SK-N-SH (cell line): ENCODE measurements at regions of chr11 and their contacts with region 1.

Region 1: GRCh38 chr11:66976048-66976467 is 954 bp downstream of the C11orf86 start:
- DNase-seq: peak; percentile 86
- H3K4me3 ChIP-seq: no peak overlapping the region; a peak in 1 of 4 replicates
- H3K27ac ChIP-seq: no peak overlapping the region
- H3K4me1 ChIP-seq: peaks cover 0 to 11% of the 10 kb centered on the region in 2 experiments; a peak in 2 of 4 replicates
- H3K27me3 ChIP-seq: no peaks in the 10 kb centered on the region
- CTCF ChIP-seq: peak; percentile 86
- EP300 ChIP-seq: no peak
- RAD21 ChIP-seq: peak; percentile 90

Region 2: DNA sequence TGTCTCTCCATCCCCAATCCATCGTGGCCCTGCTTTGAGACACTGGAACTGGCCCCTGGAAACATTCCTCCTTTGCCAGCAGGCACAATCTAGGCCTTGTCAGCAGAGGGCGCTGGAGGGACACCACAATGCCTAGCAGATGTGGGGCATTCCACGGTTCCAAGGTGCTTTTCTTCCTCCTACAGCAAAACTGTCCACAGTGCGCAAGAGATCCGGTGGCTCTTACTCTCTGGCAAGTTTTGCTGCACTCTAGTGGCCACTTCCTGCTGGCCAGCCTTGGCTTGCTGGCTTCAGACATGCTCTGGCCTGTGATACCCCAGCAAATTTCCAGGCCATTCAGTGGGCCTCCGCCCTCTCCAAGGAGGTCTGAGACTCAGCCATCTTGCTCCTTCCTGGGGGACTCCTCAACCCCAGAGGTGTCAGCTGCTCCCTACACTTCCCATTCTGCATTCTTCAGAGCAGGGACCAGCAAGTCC is 281.3 kb before region 1 on chr11:
- CTCF ChIA-PET with region 1: interaction called, 34 read pairs
- POLR2A ChIA-PET with region 1: no interaction called
- DNase-seq: peak; percentile 89
- H3K4me3 ChIP-seq: no peak overlapping the region; a peak in 1 of 4 replicates
- H3K27ac ChIP-seq: peak overlapping the region in 1 of 2 experiments; percentile 11; a peak in 2 of 4 replicates
- H3K4me1 ChIP-seq: no peaks in the 10 kb centered on the region
- H3K27me3 ChIP-seq: no peaks in the 10 kb centered on the region
- CTCF ChIP-seq: peak; percentile 98
- EP300 ChIP-seq: no peak
- RAD21 ChIP-seq: peak; percentile 89

Region 3: GRCh38 chr11:66842896-66843775 is 132.9 kb before region 1 on chr11 and contains the start of gene RCE1:
- CTCF ChIA-PET with region 1: interaction called, 46 read pairs
- POLR2A ChIA-PET with region 1: interaction called, 4 read pairs
- DNase-seq: peak; percentile 99
- H3K4me3 ChIP-seq: peak within 1 kb of the TSS; percentile 88 to 91
- H3K27ac ChIP-seq: peak within 1 kb of the TSS; percentile 85 to 90
- H3K4me1 ChIP-seq: peaks cover 13 to 24% of the 10 kb centered on the region in 2 experiments; a peak in 3 of 4 replicates
- H3K27me3 ChIP-seq: no peaks in the 10 kb centered on the region
- CTCF ChIP-seq: no peak
- EP300 ChIP-seq: no peak
- RAD21 ChIP-seq: no peak
- polyA plus RNA-seq, gene RCE1: 25.0 and 25.4 TPM in 2 replicates

Region 4: DNA sequence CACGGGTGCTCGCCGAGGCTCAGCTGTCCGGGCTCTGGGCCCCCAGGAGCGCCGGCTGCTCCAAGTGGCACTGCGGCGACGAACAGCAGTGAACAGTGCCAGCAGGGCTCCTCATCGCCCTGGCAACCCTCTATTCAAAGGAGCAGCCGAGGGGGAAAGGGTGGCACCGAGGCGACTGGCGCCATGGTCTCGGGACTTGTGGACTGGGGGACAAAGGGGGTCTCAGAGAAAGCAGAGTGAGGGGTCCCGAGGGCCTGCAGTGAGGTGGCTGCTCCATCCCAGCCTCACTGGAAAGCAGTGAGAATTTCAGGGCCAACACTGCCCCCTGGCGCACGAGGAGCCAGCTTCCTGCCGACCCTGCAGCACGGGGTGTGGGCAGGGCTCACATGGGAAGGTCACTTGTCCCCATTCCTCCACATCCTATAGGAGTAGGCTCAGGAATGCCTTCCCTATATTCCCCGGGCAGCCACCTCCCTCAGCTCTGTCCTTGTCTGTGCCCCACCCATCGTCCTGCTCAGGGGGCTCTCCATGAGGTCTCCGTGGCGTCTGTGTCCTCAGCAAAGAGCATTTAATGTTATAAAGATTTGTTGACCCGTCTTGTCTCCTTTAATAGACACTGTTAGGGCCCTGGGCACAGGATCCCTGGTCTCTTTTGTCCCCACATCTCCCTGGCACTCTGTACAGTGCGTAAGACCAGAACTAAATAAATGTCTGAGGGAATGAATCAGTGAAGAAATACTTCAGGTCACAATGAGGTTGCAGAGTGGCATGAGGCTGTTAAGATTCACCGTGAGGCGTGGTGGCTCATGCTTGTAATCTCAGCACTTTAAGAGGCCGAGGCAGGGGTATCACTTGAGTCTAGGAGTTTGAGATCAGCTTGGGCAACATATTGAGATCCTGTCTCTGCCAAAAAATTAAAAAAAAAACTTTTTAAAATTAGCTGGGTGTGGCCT is 92.8 kb before region 1 on chr11:
- CTCF ChIA-PET with region 1: interaction called, 44 read pairs
- POLR2A ChIA-PET with region 1: no interaction called
- DNase-seq: peak; percentile 85
- H3K4me3 ChIP-seq: no peak overlapping the region
- H3K27ac ChIP-seq: peak overlapping the region; percentile 13 to 48
- H3K4me1 ChIP-seq: peaks cover 4 to 60% of the 10 kb centered on the region in 2 experiments; a peak in 2 of 4 replicates
- H3K27me3 ChIP-seq: no peaks in the 10 kb centered on the region
- CTCF ChIP-seq: peak; percentile 72
- EP300 ChIP-seq: no peak
- RAD21 ChIP-seq: peak; percentile 72

Region 5: DNA sequence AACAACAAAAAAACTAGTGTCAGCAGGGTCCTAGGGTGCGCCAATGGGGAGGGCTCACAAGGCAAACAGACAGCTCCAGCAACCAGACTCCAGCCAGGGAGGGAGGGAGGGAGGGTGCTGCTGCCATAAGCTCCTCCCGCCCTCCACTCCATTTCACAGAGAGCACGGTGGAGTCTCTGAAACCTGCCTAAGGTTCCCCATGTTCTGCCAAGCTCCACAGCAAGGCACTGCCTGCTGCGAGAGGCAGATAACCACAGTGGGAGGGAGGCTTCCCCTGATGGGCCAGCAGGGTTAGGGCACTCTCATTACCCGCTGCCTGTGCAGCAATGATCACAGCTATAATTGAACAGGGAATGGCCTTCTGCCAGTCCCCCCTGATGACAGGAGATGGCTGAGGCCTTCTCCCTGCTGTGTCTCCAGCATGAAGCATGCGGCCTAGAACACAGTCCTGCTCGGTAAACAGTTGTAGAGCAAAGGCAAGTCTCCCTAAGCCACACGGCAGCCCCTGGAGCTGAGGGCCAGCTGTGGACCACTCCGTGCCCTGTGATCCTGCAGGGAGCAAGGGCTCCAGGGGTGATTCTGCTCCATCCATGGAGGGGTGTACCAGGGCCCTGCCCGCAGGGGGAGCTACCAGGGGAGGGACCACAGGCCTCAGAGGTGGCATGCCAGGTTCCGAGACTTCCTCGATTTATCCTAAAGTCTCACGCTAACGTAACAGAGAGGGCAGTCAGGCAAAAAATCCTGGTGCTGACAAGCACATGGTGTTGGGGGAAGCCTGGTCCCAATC is 60.8 kb before region 1 on chr11:
- CTCF ChIA-PET with region 1: no interaction called
- POLR2A ChIA-PET with region 1: no interaction called
- DNase-seq: no peak
- H3K4me3 ChIP-seq: no peak overlapping the region
- H3K27ac ChIP-seq: no peak overlapping the region
- H3K4me1 ChIP-seq: peaks cover 0 to 5% of the 10 kb centered on the region in 2 experiments; a peak in 1 of 4 replicates
- H3K27me3 ChIP-seq: no peaks in the 10 kb centered on the region
- CTCF ChIP-seq: no peak
- EP300 ChIP-seq: no peak
- RAD21 ChIP-seq: no peak

Region 6: DNA sequence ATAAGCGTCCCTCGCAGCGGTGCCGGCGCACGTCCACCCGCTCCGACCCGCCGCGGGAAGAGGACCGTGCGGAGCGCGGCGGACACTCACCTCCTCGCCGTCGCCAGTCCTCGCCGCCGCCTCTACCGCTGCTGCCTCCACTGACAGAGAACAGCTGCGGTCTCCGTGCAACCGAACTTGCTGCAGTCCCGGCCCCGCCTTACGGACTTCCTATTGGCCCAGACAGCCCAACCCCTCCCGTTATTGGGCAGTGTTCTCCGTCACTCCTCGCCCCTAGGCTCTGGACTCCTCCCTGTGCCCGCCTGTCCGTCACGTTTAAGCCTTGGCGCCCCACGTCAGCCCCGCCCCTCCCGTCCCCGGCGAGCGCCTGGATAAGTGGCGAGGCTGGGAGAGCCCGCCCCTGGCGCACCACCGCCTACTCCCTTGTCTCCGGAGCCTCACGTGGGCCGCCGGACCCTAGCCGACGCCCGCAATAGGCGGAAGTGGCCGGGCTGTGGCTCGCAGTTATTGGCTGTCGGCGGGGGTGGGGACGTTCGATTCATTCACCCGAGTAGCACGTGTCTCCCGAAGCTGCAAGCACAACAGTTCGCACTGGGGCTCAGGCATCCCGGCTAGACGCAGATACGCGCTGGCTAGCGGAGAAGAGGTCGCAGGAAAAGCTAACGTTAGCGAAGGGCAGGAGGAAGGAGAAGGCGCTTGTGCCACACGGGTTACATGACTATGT is 17.7 kb before region 1 on chr11 and contains the start of gene PC:
- CTCF ChIA-PET with region 1: interaction called, 54 read pairs
- POLR2A ChIA-PET with region 1: no interaction called
- DNase-seq: peak; percentile 99
- H3K4me3 ChIP-seq: peak within 1 kb of the TSS; percentile 67 to 73
- H3K27ac ChIP-seq: peak within 1 kb of the TSS; percentile 29 to 47; a peak in 3 of 4 replicates
- H3K4me1 ChIP-seq: peaks cover 0 to 26% of the 10 kb centered on the region in 2 experiments; a peak in 3 of 4 replicates
- H3K27me3 ChIP-seq: no peaks in the 10 kb centered on the region
- CTCF ChIP-seq: no peak
- EP300 ChIP-seq: 0 out of 4 replicates have a peak, but pooled peaks have one; percentile 2 to 36
- RAD21 ChIP-seq: 0 out of 2 replicates have a peak, but pooled peaks have one; percentile 10
- polyA plus RNA-seq, gene PC: 9.7 and 11.8 TPM in 2 replicates

Region 7: GRCh38 chr11:67439321-67439883 is 463.3 kb after region 1 on chr11:
- CTCF ChIA-PET with region 1: no interaction called
- POLR2A ChIA-PET with region 1: no interaction called
- DNase-seq: no peak
- H3K4me3 ChIP-seq: no peak overlapping the region
- H3K27ac ChIP-seq: no peak overlapping the region
- H3K4me1 ChIP-seq: peaks cover 4 to 11% of the 10 kb centered on the region in 2 experiments; a peak in 3 of 4 replicates
- H3K27me3 ChIP-seq: no peaks in the 10 kb centered on the region
- CTCF ChIP-seq: peak; percentile 44
- EP300 ChIP-seq: no peak
- RAD21 ChIP-seq: no peak